ENCODE measurements at regions of chr17 and their contacts with region 1.

Region 1: DNA sequence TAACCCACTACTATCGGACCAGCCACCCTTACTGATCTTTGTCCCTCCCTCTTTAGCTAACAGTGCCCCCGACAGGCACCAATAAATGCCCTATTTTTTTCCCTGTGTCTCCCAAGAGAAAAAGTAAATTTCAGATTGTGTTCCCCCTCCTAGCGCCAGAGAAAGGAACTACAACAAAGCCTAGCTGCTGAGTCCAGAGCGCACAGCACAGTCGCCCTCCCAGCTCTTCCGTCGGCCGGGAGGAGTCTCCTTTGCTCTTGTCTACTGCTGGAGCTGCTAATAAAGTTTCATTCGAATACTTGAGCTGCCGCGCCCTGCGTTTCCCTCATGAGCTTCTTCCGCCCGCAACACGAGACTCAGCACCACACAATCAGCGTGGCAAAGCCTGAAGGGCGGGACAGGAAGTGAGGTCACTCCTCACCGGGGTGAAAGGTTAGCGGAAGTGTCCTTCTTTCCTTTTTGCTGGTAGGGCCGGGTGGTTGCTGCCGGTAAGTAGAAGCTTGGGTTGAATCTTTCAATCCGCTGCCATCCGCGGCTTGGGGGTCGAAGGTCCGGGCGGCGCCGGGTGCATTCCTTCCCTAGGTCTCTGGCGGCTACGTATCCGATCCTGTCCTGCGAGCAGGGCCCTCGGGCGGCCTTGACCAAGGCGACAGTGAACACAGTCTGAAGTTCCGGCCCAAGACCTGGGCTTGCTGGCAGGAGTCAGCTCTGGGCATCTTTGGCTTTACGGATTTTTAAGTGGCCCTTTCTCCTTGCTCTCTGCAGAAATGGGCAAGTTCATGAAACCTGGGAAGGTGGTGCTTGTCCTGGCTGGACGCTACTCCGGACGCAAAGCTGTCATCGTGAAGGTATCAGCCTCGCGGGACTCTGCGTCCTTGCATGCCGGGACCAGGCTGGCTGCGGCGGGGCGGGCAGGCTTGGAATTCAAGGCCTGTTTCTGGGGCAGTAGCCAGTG is at the start of gene RPL27:
- DNase-seq: peak; percentile 100
- ATAC-seq: peak; percentile 97
- H3K4me3 ChIP-seq: peak within 1 kb of the TSS; percentile 95
- H3K27ac ChIP-seq: peak within 1 kb of the TSS; percentile 82
- H3K4me1 ChIP-seq: peaks cover 3% of the 10 kb centered on the region; the same call in 1 of the 2 replicates
- H3K27me3 ChIP-seq: no peaks in the 10 kb centered on the region
- CTCF ChIP-seq: peak; percentile 83 to 89 (median 88)
- EP300 ChIP-seq: peak in 1 of 2 experiments; percentile 73; a peak in 2 of 4 replicates
- POLR2A ChIP-seq: peak; percentile 95
- RAD21 ChIP-seq: peak; percentile 60
- polyA plus RNA-seq, gene RPL27: 4,376 to 4,686 TPM

Region 2: DNA sequence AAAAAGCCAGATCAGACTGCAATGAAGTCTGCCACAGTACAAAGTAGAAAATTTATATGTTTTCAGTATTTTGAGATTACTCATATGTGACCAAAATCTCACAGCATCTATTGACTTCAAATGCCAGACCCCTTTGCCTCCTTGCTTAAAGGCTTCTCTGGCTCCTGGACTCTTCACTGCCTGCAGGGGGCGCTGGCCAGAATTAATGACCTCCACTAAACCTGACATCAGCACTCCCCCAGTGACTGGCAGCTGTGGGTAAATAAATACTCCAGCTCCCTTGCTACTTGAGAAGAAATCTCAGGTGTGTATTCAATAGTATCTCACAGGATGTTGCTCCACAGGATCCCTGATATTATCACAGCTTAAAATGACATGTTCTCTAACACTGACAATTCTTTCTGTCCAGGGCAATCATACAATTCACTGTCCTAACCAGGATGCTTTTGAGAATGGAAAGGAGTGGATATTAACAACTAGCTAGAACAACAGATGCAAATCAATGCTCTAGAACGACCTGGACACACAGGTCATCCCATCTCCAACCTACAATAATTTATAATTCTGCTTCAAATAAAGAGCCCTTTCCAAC is 178.2 kb before region 1 on chr17:
- CTCF ChIA-PET with region 1: interaction called, 55 read pairs
- POLR2A ChIA-PET with region 1: interaction called, 3 read pairs
- RAD21 ChIA-PET with region 1: interaction called, 7 read pairs
- SMC1A ChIA-PET with region 1: interaction called, 5 read pairs
- in situ Hi-C with region 1: no loop called
- intact Hi-C with region 1: no loop called
- DNase-seq: no peak
- ATAC-seq: peak; percentile 69
- H3K4me3 ChIP-seq: no peak overlapping the region
- H3K27ac ChIP-seq: no peak overlapping the region
- H3K4me1 ChIP-seq: peaks cover 6% of the 10 kb centered on the region; the same call in 1 of the 2 replicates
- H3K27me3 ChIP-seq: no peaks in the 10 kb centered on the region
- CTCF ChIP-seq: peak; percentile 68 to 88 (median 74)
- EP300 ChIP-seq: no peak
- POLR2A ChIP-seq: no peak
- RAD21 ChIP-seq: peak; percentile 31; the same call in 1 of the 2 replicates

Region 3: DNA sequence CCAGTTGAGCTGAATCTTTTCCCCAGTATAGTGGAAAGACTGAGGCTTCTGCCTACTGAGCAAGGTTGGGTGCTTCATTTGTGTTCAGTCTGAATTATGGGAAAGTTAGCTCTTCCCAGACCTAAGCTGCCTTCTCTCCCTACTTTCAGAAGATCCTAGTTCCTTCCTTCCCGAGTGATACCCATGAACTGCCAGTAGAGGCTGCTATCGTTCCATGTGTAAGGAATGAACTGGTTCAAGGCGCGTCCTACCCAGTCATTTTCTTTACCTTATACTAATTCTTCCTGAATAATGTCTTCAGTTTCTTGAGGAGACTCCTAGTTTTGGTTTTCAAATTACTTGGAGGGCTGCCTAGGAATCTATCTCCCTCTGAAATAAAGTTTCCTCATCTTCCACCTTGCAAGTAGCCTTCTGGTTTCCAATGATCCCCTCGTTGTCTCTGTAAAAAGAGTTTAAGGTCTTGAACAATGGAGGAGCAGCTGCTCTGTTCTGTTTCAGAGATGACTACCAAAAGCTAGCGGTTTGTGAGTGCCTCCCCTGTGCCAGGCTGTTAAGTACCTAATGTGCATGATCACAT is 154.8 kb before region 1 on chr17:
- CTCF ChIA-PET with region 1: interaction called, 38 read pairs
- POLR2A ChIA-PET with region 1: no interaction called
- RAD21 ChIA-PET with region 1: interaction called, 4 read pairs
- SMC1A ChIA-PET with region 1: interaction called, 4 read pairs
- in situ Hi-C with region 1: no loop called
- intact Hi-C with region 1: loop called (anchors 10 kb)
- DNase-seq: no peak
- ATAC-seq: no peak
- H3K4me3 ChIP-seq: no peak overlapping the region
- H3K27ac ChIP-seq: no peak overlapping the region
- H3K4me1 ChIP-seq: no peaks in the 10 kb centered on the region; the same call in 1 of the 2 replicates
- H3K27me3 ChIP-seq: no peaks in the 10 kb centered on the region
- CTCF ChIP-seq: peak; percentile 82 to 87 (median 85)
- EP300 ChIP-seq: no peak
- POLR2A ChIP-seq: no peak; the same call in 1 of the 2 replicates
- RAD21 ChIP-seq: peak; percentile 74

Region 4: DNA sequence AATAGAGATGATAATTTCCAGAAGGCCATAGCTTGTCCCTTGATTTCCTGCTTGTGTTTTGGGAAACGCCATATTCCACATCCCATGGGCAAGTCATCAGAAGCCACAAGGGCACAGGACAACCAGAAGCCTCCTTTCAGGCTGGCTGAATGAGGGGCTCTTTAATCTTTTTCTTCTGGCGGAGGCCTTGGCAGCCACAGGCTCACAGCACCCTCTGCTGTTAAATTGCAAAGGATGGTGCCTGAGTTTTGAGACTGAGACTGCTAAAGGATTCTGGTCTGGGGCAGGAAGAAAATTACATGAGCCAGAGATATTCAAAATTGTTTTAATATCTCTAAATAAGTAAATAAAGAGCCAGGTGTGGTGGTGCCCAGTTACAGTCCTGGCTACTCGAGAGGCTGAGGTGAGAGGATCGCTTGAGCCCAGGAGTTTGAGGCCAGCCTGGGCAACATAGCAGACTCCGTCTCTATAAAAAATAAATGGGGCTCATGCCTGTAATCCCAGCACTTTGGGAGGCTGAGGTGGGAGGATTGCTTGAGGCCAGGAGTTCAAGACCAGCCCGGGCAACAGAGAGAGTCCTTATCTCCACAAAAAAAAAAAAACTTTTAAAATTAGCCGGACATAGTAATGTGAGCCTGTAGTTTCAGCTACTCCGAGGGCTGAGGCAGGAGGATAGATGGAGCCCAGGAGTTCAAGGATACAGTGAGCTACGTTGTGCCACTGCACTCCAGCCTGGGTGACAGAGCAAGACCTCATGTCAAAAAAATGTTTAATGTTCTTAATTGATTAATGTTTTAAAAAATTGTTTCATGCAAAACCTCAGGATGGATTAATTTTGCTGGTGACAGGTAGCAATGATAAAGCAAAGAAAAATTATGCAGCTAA is 60.3 kb before region 1 on chr17:
- CTCF ChIA-PET with region 1: interaction called, 13 read pairs
- POLR2A ChIA-PET with region 1: no interaction called
- RAD21 ChIA-PET with region 1: interaction called, 4 read pairs
- SMC1A ChIA-PET with region 1: interaction called, 9 read pairs
- in situ Hi-C with region 1: no loop called
- intact Hi-C with region 1: no loop called
- DNase-seq: no peak
- ATAC-seq: peak; percentile 90
- H3K4me3 ChIP-seq: no peak overlapping the region
- H3K27ac ChIP-seq: no peak overlapping the region
- H3K4me1 ChIP-seq: no peaks in the 10 kb centered on the region
- H3K27me3 ChIP-seq: no peaks in the 10 kb centered on the region
- CTCF ChIP-seq: peak; percentile 57 to 79 (median 58)
- EP300 ChIP-seq: no peak
- POLR2A ChIP-seq: no peak
- RAD21 ChIP-seq: peak; percentile 83

Region 5: GRCh38 chr17:42964161-42964932 is 33.9 kb before region 1 on chr17 and contains the start of gene AARSD1:
- CTCF ChIA-PET with region 1: interaction called, 6 read pairs
- POLR2A ChIA-PET with region 1: interaction called, 5 read pairs
- RAD21 ChIA-PET with region 1: interaction called, 6 read pairs
- SMC1A ChIA-PET with region 1: interaction called, 9 read pairs
- in situ Hi-C with region 1: no loop called
- intact Hi-C with region 1: loop called (anchors 2 kb)
- DNase-seq: peak; percentile 87
- ATAC-seq: peak; percentile 97
- H3K4me3 ChIP-seq: peak within 1 kb of the TSS; percentile 73
- H3K27ac ChIP-seq: peak within 1 kb of the TSS; percentile 80
- H3K4me1 ChIP-seq: no peaks in the 10 kb centered on the region; the same call in 1 of the 2 replicates
- H3K27me3 ChIP-seq: no peaks in the 10 kb centered on the region
- CTCF ChIP-seq: no peak
- EP300 ChIP-seq: no peak
- POLR2A ChIP-seq: peak; percentile 96
- RAD21 ChIP-seq: no peak
- polyA plus RNA-seq, gene AARSD1: 32.2 to 53.6 TPM

Measured in GM12878 (cell line).